Activated CD4-positive, alpha-beta memory T cell treated with anti-CD3 and anti-CD28 coated beads for 36 hours (primary cell): ENCODE measurements at regions of chr17 and their contacts with region 1.

Region 1: DNA sequence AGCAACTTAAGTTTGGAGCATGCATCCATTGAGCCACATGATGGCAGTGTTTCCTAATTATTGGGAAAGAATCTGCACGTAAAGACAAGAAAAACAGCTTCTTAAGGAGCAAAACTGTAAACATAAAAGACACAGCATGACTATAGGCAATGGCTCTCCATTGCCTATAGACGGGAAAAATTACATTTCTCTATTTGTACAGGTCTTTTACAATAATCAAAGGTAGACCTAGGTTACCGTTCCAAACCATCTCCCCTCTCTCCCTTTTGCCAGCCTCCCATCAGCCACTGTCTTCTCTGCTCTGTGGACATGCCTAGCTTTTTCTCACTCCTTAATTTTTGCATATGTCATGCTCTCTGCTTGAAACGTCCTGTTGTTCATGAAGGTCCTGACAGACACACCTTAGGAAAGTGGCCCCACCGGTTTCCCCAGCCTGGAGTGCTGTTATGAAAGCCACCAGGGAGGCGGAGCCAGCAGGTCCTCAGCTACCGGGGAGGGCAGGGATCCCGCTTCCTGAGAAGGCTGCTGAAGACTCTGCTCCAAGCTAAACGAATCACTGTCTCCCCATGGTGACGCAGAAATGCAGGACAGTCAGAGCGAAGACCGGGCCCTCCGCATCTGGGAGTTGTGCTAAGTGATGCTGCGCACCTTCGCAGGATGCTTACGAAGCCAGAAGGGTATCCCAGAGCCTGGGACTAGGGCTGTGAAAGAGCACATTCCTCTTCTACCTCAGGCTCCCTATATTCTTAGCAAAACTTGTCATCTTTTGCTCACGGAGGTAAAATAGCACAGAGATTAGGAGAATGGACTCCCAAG is 2.2 kb upstream of the SLC16A11 start:
- DNase-seq: peak; percentile 63
- H3K4me3 Mint-ChIP-seq: peak overlapping the region; percentile 70
- H3K27ac Mint-ChIP-seq: peak overlapping the region; percentile 87
- H3K4me1 Mint-ChIP-seq: peaks cover 45% of the 10 kb centered on the region
- H3K27me3 Mint-ChIP-seq: peaks cover 2% of the 10 kb centered on the region

Region 2: DNA sequence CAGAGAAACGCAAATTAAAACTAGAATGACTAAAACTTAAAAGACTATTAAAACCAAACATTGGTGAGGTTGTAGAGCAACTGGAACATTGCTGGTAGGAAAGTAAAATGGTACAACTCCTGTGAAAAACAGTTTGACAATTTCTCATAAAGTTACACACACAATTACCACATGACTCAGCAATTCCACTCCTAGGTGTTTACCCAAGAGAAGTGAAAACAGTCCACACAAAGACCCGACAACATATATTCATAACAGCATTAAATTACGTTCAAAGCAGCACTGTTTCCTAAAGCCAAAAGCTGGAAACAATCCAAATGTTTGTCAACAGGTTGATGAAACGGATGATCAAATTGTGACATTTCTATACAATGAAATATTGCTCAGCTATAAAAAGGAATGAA is 76.8 kb before region 1 on chr17:
- CTCF ChIA-PET with region 1: no interaction called
- POLR2A ChIA-PET with region 1: no interaction called
- intact Hi-C with region 1: loop called (anchors 2 kb)
- DNase-seq: no peak
- H3K4me3 Mint-ChIP-seq: no peak overlapping the region
- H3K27ac Mint-ChIP-seq: peak overlapping the region; percentile 62
- H3K4me1 Mint-ChIP-seq: peaks cover 17% of the 10 kb centered on the region
- H3K27me3 Mint-ChIP-seq: no peaks in the 10 kb centered on the region

Region 3: DNA sequence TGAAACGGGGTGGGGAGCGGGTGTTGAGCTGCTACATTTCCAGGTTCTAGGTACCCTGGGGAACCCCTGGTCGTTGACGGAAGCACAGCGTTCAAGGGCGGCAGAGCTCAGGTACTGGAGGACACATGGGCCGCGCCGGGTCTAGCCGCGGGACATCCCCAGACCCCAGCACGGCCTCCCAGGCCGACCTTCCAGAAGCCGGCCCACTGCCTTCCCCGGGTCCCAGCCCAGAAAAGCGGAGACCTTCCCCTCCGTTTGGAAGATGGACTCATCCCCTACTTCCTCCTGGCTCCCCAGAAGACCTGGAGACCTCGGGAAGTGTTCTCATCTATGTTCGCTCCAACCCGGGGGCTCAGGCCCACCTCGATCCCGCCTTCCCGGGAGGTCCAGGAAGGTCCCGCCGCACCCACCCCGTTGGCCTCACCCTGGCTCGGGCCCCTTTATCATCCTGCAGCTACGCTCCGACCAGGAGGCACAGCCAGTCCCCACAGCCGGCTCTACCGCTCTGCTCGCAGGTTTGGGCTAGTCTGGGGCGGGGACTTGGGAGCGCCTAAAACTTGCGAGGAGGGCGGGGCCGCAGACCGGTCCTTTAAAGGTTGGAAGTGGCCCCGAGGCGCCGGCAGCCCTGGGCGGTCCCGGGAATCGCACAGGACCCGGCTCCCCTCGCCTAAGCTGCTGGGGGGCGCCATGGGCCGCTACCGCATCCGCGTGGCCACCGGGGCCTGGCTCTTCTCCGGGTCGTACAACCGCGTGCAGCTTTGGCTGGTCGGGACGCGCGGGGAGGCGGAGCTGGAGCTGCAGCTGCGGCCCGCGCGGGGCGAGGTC is 50.5 kb before region 1 on chr17 and contains the start of gene ALOX12:
- CTCF ChIA-PET with region 1: no interaction called
- POLR2A ChIA-PET with region 1: no interaction called
- intact Hi-C with region 1: no loop called
- DNase-seq: no peak
- H3K4me3 Mint-ChIP-seq: no peak within 1 kb of the TSS
- H3K27ac Mint-ChIP-seq: no peak within 1 kb of the TSS
- H3K4me1 Mint-ChIP-seq: no peaks in the 10 kb centered on the region
- H3K27me3 Mint-ChIP-seq: no peaks in the 10 kb centered on the region
- total RNA-seq, gene ALOX12: not detected

Region 4: GRCh38 chr17:7021993-7022778 is 23.9 kb before region 1 on chr17:
- CTCF ChIA-PET with region 1: interaction called, 15 read pairs
- POLR2A ChIA-PET with region 1: no interaction called
- intact Hi-C with region 1: no loop called
- DNase-seq: peak; percentile 87
- H3K4me3 Mint-ChIP-seq: peak overlapping the region; percentile 61
- H3K27ac Mint-ChIP-seq: peak overlapping the region; percentile 45
- H3K4me1 Mint-ChIP-seq: peaks cover 38% of the 10 kb centered on the region
- H3K27me3 Mint-ChIP-seq: peaks cover 2% of the 10 kb centered on the region

Region 5: DNA sequence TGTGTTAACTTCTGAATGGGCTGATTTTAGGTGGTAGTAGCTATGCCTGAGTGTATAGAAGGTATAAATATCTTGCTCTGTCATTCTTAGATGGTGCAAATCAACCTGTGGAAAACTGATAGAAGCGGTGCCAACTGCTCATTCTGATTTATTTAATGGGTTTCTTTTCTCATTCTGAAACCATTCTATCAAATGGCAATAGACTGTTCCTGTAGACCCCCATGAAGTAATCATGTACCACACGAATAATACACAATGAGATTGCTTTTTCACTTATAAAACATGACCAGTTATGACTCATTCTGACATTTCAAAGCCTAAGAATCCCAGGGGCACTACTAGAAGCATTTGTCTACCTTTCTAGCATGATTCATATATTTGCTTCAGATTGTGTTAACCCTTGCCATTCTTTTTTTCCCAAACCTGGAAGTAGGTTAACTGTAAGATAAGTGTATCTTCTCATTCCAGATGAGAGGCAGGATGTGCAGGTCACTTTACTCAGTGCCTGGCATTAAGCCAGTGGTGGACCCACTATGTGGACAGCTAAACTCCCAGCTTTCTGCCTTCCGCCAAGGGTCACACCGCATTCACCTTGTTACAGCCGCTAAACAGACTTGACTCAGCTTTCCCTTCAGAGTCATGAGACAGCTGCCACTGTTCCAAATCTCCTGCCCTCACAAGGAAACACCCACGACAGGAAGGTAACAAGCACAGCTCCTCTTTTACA is 14.2 kb after region 1 on chr17:
- CTCF ChIA-PET with region 1: interaction called, 14 read pairs
- POLR2A ChIA-PET with region 1: interaction called, 12 read pairs
- intact Hi-C with region 1: loop called (anchors 1 kb)
- DNase-seq: peak; percentile 75
- H3K4me3 Mint-ChIP-seq: no peak overlapping the region
- H3K27ac Mint-ChIP-seq: peak overlapping the region; percentile 91
- H3K4me1 Mint-ChIP-seq: peaks cover 24% of the 10 kb centered on the region
- H3K27me3 Mint-ChIP-seq: peaks cover 14% of the 10 kb centered on the region

Region 6: GRCh38 chr17:7177196-7177953 is 131.3 kb after region 1 on chr17:
- CTCF ChIA-PET with region 1: interaction called, 22 read pairs
- POLR2A ChIA-PET with region 1: interaction called, 3 read pairs
- intact Hi-C with region 1: loop called (anchors 1 kb)
- DNase-seq: peak; percentile 76
- H3K4me3 Mint-ChIP-seq: peak overlapping the region; percentile 58
- H3K27ac Mint-ChIP-seq: no peak overlapping the region
- H3K4me1 Mint-ChIP-seq: peaks cover 11% of the 10 kb centered on the region
- H3K27me3 Mint-ChIP-seq: peaks cover 12% of the 10 kb centered on the region

Region 7: GRCh38 chr17:7296189-7296902 is 250.2 kb after region 1 on chr17:
- CTCF ChIA-PET with region 1: interaction called, 39 read pairs
- POLR2A ChIA-PET with region 1: interaction called, 3 read pairs
- intact Hi-C with region 1: loop called (anchors 2 kb)
- DNase-seq: peak; percentile 79
- H3K4me3 Mint-ChIP-seq: peak overlapping the region; percentile 35
- H3K27ac Mint-ChIP-seq: no peak overlapping the region
- H3K4me1 Mint-ChIP-seq: peaks cover 21% of the 10 kb centered on the region
- H3K27me3 Mint-ChIP-seq: peaks cover 26% of the 10 kb centered on the region